WTC11 (cell line): ENCODE measurements at regions of chr1 and their contacts with region 1.

Region 1: GRCh38 chr1:18246543-18246942 is 138.9 kb downstream of the IGSF21 start:
- DNase-seq: peak; percentile 35
- ATAC-seq: peak; percentile 65; the same call in 1 of the 2 replicates
- H3K4me3 Mint-ChIP-seq: no peak overlapping the region
- H3K27ac Mint-ChIP-seq: no peak overlapping the region; the same call in 1 of the 2 replicates
- H3K4me1 Mint-ChIP-seq: peaks cover 19% of the 10 kb centered on the region
- H3K27me3 Mint-ChIP-seq: no peaks in the 10 kb centered on the region
- CTCF ChIP-seq: no peak

Region 2: DNA sequence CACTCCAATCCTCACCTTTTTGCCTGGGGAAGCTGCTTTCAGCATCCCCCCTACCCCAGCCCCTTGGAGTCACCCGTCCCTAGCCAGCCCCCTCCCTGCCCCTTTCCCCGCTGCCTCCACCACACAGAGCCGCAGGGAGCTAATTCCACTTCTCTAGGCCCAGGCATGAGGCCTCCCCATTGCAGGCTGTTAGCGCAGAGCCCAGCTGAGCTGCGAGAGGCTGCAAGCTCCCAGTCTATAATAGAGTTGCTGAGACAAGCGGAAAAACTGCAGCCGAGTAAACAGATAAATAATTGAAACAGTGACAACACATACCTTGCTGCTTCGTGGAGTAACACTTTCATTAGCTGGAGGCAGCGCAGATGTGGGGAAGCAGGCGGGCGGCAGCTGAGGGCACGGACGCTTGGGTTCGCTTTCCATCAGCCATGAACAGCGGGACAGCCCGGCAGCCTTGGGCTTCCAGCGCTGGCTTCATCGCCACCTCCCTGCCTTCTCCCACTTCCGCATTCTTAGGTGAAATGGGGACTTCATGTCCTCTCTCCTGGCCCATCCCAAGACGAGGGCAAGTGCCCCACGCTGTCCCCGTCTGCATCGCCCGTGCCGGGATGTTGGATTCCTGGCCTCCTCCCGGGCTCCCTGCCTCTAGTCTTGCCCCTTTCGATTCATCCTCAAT is 44.3 kb after region 1 on chr1:
- CTCF ChIA-PET with region 1: interaction called, 11 read pairs
- POLR2A ChIA-PET with region 1: no interaction called
- DNase-seq: peak; percentile 30
- ATAC-seq: peak; percentile 24
- H3K4me3 Mint-ChIP-seq: no peak overlapping the region
- H3K27ac Mint-ChIP-seq: peak overlapping the region; percentile 93
- H3K4me1 Mint-ChIP-seq: peaks cover 88% of the 10 kb centered on the region
- H3K27me3 Mint-ChIP-seq: no peaks in the 10 kb centered on the region; the same call in 1 of the 2 replicates
- CTCF ChIP-seq: no peak

Region 3: GRCh38 chr1:18464665-18465050 is 218.1 kb after region 1 on chr1:
- CTCF ChIA-PET with region 1: no interaction called
- POLR2A ChIA-PET with region 1: no interaction called
- DNase-seq: no peak
- ATAC-seq: no peak
- H3K4me3 Mint-ChIP-seq: no peak overlapping the region
- H3K27ac Mint-ChIP-seq: no peak overlapping the region
- H3K4me1 Mint-ChIP-seq: peaks cover 11% of the 10 kb centered on the region
- H3K27me3 Mint-ChIP-seq: peaks cover 37% of the 10 kb centered on the region
- CTCF ChIP-seq: no peak